ENCODE measurements at regions of chr11 and their contacts with region 1.

Region 1: DNA sequence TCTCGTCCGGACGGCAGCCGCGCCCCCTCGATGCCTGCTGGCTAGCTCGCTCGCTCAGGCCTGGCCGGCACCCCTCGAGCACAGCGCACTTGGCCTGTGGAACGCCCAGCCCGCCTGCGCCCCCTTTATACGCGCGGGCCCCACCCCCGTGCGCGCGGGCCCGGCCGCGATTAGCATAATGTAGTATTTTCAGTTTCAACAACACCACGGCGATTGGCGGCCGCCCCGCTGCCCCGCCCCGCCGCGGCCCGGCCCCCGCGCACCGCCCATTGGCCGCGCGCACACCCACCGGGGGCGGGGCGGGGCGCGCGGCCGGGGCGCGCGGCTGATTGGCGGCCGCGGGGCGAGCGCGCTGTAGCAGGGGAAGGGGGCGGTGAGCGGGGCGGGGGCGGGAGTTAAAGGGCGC is at the start of gene CDKN1C:
- DNase-seq: peak; percentile 71 to 78
- ATAC-seq: peak; percentile 57 to 74
- H3K4me3 ChIP-seq: peak within 1 kb of the TSS; percentile 71
- H3K27ac ChIP-seq: peak within 1 kb of the TSS; percentile 66 to 82; a peak in 5 of 6 replicates
- H3K4me1 ChIP-seq: peaks cover 5% of the 10 kb centered on the region; the same call in 1 of the 3 replicates
- CTCF ChIP-seq: no peak
- EP300 ChIP-seq: no peak
- POLR2A ChIP-seq: peak; percentile 40
- RAD21 ChIP-seq: no peak
- polyA plus RNA-seq, gene CDKN1C: 0.40 and 0.41 TPM in 2 replicates

Region 2: GRCh38 chr11:2428322-2428795 is 457.3 kb before region 1 on chr11:
- CTCF ChIA-PET with region 1: interaction called, 31 read pairs
- POLR2A ChIA-PET with region 1: no interaction called
- DNase-seq: peak; percentile 56 to 68
- ATAC-seq: peak; percentile 49 to 92; a peak in 3 of 6 replicates
- H3K4me3 ChIP-seq: no peak overlapping the region
- H3K27ac ChIP-seq: no peak overlapping the region
- H3K4me1 ChIP-seq: no peaks in the 10 kb centered on the region
- CTCF ChIP-seq: peak; percentile 62
- EP300 ChIP-seq: no peak
- POLR2A ChIP-seq: no peak
- RAD21 ChIP-seq: peak; percentile 87 to 95

Region 3: DNA sequence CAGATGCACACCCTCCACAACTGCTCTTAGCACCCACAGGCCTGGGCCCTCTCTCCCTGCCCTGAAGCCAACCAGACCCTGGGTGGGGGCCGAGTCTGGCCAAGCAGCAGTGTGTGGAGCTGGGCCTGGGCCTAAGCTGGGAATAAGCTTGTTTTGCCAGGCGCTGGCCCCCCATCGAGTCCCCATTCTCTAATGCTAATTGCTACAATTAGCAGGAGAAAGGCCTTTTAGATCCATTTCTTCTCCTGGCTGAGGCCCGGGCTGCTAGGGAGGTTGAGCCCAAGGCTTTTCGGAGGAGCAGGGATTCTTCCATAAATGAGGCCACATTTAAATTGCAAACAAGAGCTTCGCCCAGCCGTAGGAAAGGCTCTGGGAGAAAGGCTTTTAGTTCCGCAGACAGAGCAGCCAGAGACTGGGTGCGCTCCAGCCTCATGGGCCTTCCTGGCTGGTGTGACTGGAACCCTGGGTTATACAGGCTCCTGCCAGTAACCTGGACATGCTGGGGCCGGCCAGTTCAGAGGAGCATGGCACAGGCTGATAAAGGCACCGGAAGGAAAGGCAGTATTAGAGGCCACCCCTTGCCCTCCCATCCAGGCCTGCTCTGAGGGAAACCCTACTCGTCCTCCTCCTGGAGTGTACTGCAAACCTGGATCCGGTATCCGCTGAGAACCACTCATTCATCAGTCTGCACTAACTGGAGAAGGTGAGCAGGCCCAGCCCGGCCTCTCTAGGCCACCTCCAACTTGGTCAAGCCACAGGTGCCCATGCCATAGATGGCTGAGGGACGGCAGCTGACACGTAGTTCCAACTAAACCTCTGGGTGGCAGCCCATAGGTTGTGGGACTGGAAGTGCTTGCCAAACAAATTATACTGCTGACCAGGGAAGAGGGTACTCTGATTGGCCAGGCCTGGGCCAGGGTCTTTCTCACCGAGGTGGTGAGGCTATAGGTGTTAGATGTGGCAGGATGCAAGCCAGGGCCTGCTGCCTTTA is 192.1 kb before region 1 on chr11:
- CTCF ChIA-PET with region 1: interaction called, 14 read pairs
- POLR2A ChIA-PET with region 1: no interaction called
- DNase-seq: peak in 1 of 2 experiments; percentile 10
- ATAC-seq: peak in 1 of 2 experiments; percentile 42; a peak in 2 of 6 replicates
- H3K4me3 ChIP-seq: no peak overlapping the region
- H3K27ac ChIP-seq: no peak overlapping the region
- H3K4me1 ChIP-seq: peaks cover 7% of the 10 kb centered on the region; the same call in 2 of the 3 replicates
- CTCF ChIP-seq: no peak
- EP300 ChIP-seq: no peak
- POLR2A ChIP-seq: no peak
- RAD21 ChIP-seq: no peak

Region 4: DNA sequence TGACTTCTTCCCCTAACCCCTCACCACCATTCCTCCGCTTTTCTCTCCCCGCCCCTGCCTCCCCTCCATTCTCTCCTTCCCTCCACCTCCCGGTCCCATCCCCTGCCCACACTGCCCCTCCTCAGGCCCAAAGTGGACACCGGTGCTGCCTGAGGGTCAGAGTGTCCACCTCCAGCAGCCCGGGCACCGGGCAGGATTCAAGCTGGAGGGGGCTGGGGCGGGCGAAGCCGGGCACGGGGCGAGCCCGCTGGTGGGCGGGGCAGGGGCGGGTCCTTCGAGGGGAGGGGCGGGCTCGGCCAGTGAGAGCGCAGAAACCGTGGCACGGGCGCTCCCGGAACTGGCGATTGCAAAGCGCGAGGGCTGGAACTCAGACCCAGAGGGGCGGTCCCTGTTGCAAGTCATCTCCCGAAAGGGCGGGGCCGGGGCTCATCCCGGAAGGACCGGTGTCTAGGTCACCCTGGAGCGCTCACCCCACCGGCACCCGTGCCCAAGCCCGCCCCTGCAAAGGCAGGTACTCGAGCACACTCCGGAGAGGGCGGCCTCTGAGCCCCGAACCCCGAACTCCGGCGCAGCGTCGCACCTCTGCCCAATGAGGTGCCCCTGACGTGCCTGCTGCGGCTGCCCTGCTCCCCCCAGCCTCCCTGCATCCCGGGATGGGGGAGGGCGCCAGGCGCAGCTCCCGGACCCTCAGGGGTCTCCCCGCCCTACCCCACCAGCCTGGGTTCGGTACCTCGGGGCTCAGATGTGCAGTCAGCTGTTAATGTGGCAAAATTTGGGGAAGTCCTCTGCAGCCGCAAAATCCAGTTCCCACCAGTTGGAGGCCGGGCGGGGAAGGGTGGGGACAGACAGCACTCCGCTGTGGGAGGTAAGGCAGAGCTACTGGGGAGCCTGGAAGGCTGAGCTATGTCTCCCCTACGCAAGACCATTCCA is 16.4 kb after region 1 on chr11:
- CTCF ChIA-PET with region 1: interaction called, 90 read pairs
- POLR2A ChIA-PET with region 1: no interaction called
- DNase-seq: peak; percentile 94 to 95
- ATAC-seq: peak; percentile 69 to 88
- H3K4me3 ChIP-seq: peak overlapping the region; percentile 90
- H3K27ac ChIP-seq: peak overlapping the region; percentile 97 to 98
- H3K4me1 ChIP-seq: peaks cover 38% of the 10 kb centered on the region
- CTCF ChIP-seq: no peak
- EP300 ChIP-seq: no peak
- POLR2A ChIP-seq: peak; percentile 37
- RAD21 ChIP-seq: no peak

Region 5: DNA sequence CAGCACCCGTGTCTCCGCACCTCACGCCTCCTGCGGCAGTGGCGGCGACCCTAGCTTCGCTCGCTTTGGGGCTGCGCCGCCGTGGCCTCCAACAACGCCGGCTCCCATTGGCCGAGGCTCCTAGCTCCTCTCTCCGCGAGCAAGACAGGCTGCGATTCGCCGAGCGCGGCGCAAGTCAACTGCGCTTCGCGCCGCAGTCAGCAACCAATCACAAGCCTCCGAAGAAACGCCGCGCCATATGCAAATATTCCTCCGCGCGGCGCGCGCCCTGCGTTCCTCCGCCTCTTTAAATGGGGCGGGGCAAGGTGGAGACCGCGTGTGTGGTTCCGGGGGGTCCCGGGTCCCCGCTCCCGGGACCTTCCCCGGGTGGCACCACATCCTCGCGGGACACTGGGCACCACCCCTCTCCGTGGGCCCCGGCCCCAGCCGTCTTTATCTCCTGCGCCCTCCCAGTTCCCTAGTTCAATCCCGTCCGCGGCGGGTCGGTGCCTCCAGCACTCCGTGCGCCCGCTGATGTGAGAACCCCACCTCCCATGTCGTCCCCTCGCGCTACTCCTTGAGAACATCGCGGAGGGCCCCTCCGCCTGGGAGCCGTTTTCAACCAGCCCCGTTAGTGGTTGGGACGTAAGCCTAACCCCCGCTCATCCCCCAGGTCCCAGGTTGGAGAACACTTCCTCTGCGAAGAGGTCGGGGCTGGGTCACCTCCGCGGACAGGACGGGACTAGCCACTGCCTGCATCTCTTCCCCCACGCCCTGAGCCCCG is 106.7 kb after region 1 on chr11 and contains the start of gene NAP1L4:
- CTCF ChIA-PET with region 1: no interaction called
- POLR2A ChIA-PET with region 1: no interaction called
- DNase-seq: peak; percentile 98 to 100
- ATAC-seq: peak; percentile 90 to 93
- H3K4me3 ChIP-seq: peak within 1 kb of the TSS; percentile 68
- H3K27ac ChIP-seq: peak within 1 kb of the TSS; percentile 95 to 99
- H3K4me1 ChIP-seq: peaks cover 32% of the 10 kb centered on the region
- CTCF ChIP-seq: no peak
- EP300 ChIP-seq: no peak
- POLR2A ChIP-seq: peak; percentile 70
- RAD21 ChIP-seq: no peak
- polyA plus RNA-seq, gene NAP1L4: 128 and 148 TPM in 2 replicates

Measured in A549 (cell line).